BJ (cell line): ENCODE measurements at regions of chr15 and their contacts with region 1.

Region 1: DNA sequence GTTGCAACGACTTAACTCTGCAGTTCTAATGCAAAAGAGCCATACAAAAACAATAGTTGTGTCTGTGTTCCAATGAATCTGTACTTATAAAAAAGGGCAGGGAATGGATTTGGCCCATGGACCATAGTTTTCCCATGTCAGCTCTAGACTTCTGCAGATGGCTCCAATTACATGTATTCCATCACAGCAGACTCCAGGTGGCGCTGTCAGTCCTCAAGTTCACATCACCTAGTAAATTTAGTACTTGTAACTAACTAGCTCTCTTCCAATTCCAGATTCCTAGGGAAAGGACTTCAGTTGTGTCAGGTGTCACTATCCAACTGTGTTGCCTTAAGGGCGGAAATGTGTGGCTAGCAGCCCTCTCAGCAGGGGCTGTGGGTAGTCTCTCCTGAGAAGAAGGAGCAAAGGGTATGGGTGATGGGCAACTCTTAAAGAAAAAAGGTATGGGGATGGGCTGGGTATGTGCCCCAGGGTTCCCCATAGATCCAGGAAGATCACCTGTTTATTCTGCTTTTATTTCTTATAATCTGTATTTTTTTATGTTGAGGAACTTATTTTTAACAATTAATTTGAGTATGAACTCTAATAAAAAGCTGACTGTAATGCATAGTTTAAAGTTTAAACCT is 36.2 kb downstream of the BBS4 start:
- DNase-seq: no peak
- H3K4me3 ChIP-seq: no peak overlapping the region
- H3K27me3 ChIP-seq: no peaks in the 10 kb centered on the region
- CTCF ChIP-seq: peak; percentile 78

Region 2: DNA sequence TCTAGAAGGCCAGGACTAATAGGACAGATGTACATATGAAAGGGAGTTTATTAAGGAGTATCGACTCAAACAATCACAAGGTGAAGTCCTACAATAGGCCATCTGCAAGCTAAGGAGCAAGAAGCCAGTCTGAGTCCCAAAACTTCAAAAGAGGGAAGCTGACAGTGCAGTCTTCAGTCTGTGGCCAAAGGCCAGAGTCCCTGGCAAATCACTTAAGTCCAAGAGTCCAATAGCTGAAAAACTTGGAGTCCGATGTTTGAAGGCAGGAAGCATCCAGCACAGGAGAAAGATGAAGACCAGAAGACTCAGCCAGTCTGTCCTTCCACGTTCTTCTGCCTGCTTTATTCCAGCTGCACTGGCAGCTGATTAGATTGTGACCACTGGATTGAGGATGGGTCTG is 391.2 kb before region 1 on chr15:
- CTCF ChIA-PET with region 1: no interaction called
- POLR2A ChIA-PET with region 1: no interaction called
- DNase-seq: no peak
- H3K4me3 ChIP-seq: no peak overlapping the region
- H3K27me3 ChIP-seq: no peaks in the 10 kb centered on the region
- CTCF ChIP-seq: no peak

Region 3: GRCh38 chr15:72732516-72732915 is 10.3 kb after region 1 on chr15:
- CTCF ChIA-PET with region 1: interaction called, 39 read pairs
- POLR2A ChIA-PET with region 1: no interaction called
- DNase-seq: no peak
- H3K4me3 ChIP-seq: no peak overlapping the region
- H3K27me3 ChIP-seq: no peaks in the 10 kb centered on the region
- CTCF ChIP-seq: 0 out of 2 replicates have a peak, but pooled peaks have one; percentile 2

Region 4: DNA sequence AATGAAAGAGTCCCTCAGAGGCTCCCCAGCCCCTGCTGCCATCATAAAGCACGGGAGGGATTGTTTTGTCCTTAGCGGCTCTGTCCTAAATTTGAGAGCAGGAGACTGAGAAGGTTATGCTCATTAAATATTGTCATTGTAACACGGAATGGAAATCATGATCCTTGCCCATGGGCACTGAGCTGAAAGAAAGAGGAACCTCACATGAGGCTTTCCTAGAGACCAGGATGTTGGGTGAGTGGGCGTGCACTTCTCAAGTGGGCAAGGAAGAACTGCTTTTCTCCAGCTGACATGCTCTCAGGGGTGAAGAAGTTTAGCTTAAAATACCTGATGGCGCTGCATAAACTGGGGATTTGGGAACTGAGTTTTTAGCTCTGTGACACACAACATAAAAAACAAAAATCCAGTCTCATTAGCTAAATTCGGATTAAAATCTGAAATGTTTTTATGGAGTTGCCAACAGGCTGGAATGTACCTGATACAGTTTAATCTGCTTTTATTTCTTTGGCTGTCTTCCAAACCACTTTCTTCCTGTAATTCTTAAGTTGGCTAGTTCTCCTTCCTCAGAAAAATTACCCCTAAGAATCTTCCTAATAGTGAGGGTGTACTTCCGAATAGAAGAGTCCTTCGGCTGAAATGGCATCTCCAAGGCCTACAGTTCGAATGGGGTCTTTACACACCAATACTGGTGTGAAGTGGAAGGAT is 29.7 kb after region 1 on chr15:
- CTCF ChIA-PET with region 1: interaction called, 16 read pairs
- POLR2A ChIA-PET with region 1: no interaction called
- DNase-seq: no peak
- H3K4me3 ChIP-seq: no peak overlapping the region
- H3K27me3 ChIP-seq: no peaks in the 10 kb centered on the region
- CTCF ChIP-seq: no peak

Region 5: GRCh38 chr15:72764656-72765055 is 42.5 kb after region 1 on chr15:
- CTCF ChIA-PET with region 1: interaction called, 10 read pairs
- POLR2A ChIA-PET with region 1: no interaction called
- DNase-seq: no peak
- H3K4me3 ChIP-seq: no peak overlapping the region
- H3K27me3 ChIP-seq: no peaks in the 10 kb centered on the region
- CTCF ChIP-seq: no peak

Region 6: GRCh38 chr15:73081321-73081958 is 359.3 kb after region 1 on chr15:
- CTCF ChIA-PET with region 1: interaction called, 21 read pairs
- POLR2A ChIA-PET with region 1: no interaction called
- DNase-seq: no peak
- H3K4me3 ChIP-seq: no peak overlapping the region
- H3K27me3 ChIP-seq: no peaks in the 10 kb centered on the region; the same call in 1 of the 2 replicates
- CTCF ChIP-seq: peak; percentile 61